ENCODE measurements at regions of chr17 and their contacts with region 1.

Region 1: DNA sequence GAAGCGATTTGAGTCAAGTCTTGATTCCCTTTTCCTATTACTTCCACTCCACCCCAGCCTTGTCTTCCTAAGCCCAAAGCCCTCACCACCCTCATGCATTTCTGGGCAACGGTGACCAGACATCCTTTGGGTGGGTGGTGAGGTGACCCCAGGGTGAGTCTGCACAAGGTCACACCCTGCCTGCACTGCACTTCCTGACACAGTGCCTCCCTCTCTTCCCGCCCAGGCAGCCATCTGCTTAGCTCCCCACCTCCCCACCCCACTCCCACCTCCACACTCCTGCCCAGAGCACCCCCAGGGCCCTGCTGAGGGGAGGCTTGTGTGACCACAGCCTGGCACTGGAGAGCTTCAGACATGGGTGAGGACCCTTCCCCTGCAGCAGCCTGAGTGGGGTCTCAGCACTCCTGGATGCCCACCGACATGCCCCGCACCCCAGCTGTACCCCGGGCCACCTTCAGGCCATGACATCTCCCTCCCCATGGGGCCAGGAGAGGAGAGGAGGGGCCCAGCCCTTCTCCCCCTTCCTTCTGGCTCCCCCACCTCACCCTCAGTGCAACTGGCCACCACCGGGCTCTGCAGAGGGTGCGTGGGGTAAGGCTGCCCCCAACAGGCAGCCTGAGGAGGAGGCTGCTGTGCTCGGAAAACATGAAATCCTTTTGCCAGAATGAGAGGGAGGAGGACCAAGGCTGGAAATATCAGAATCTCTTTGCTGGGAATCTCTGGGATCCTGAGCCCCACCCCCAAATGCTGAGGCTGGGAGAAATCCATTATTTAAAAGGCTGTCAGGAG is 68.6 kb downstream of the CCT6B start:
- DNase-seq: no peak
- ATAC-seq: peak; percentile 83
- H3K4me3 ChIP-seq: no peak overlapping the region
- H3K27ac ChIP-seq: no peak overlapping the region
- H3K4me1 ChIP-seq: no peaks in the 10 kb centered on the region
- H3K27me3 ChIP-seq: peaks cover 3% of the 10 kb centered on the region
- CTCF ChIP-seq: peak; percentile 87

Region 2: GRCh38 chr17:34443619-34444469 is 448.8 kb before region 1 on chr17:
- CTCF ChIA-PET with region 1: no interaction called
- POLR2A ChIA-PET with region 1: no interaction called
- in situ Hi-C with region 1: no loop called
- intact Hi-C with region 1: loop called (anchors 10 kb)
- DNase-seq: no peak
- ATAC-seq: peak; percentile 89
- H3K4me3 ChIP-seq: no peak overlapping the region
- H3K27ac ChIP-seq: no peak overlapping the region
- H3K4me1 ChIP-seq: no peaks in the 10 kb centered on the region
- H3K27me3 ChIP-seq: peaks cover 12% of the 10 kb centered on the region; the same call in 1 of the 2 replicates
- CTCF ChIP-seq: peak; percentile 72

Region 3: DNA sequence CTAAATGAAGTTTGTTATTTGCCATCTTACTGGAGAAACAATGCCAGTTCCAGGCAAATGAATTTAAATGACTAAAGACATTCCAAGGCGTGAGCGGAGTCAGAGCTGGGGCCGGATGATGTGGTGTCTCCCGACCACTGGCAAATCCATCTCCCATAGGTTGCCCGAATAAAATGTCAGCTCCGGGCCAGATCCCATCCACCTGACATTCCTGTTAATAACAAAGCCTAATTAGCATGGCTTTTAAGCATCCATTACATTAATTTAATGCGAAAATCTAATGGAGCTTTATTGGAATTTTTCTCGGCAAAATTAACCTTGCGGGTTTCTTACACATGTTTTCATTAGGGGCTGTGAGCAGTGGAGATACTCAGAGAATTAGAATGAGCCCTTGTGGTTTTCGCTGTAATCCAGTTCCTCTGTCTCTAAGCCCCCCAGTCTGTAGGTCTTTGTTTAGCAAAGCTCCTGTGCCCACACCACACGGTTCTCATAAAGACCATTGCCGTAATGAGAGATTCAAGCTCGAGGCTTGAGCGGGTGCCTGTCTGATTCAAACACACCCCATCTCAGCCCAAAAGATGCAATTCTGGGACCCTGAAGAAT is 54.7 kb before region 1 on chr17:
- CTCF ChIA-PET with region 1: no interaction called
- POLR2A ChIA-PET with region 1: no interaction called
- in situ Hi-C with region 1: no loop called
- intact Hi-C with region 1: loop called (anchors 10 kb)
- DNase-seq: no peak
- ATAC-seq: no peak
- H3K4me3 ChIP-seq: no peak overlapping the region
- H3K27ac ChIP-seq: no peak overlapping the region
- H3K4me1 ChIP-seq: no peaks in the 10 kb centered on the region
- H3K27me3 ChIP-seq: peaks cover 8% of the 10 kb centered on the region
- CTCF ChIP-seq: no peak

Region 4: GRCh38 chr17:35127751-35128514 is 235.3 kb after region 1 on chr17:
- CTCF ChIA-PET with region 1: no interaction called
- POLR2A ChIA-PET with region 1: no interaction called
- in situ Hi-C with region 1: no loop called
- intact Hi-C with region 1: no loop called
- DNase-seq: no peak
- ATAC-seq: no peak
- H3K4me3 ChIP-seq: no peak overlapping the region
- H3K27ac ChIP-seq: no peak overlapping the region
- H3K4me1 ChIP-seq: no peaks in the 10 kb centered on the region
- H3K27me3 ChIP-seq: no peaks in the 10 kb centered on the region
- CTCF ChIP-seq: no peak

Measured in Panc1 (cell line).